H1 (cell line): ENCODE measurements at regions of chr18 and their contacts with region 1.

Region 1: GRCh38 chr18:36942264-36942663 is 113.3 kb downstream of the KIAA1328 start:
- DNase-seq: no peak
- H3K4me3 ChIP-seq: no peak overlapping the region
- H3K27ac ChIP-seq: no peak overlapping the region
- H3K4me1 ChIP-seq: peaks cover 0 to 15% (median 0%) of the 10 kb centered on the region in 4 experiments; a peak in 2 of 7 replicates
- H3K27me3 ChIP-seq: no peaks in the 10 kb centered on the region
- CTCF ChIP-seq: peak in 2 of 3 experiments; percentile 73 to 87; a peak in 3 of 4 replicates
- EP300 ChIP-seq: no peak
- POLR2A ChIP-seq: no peak
- RAD21 ChIP-seq: peak; percentile 96 to 97

Region 2: DNA sequence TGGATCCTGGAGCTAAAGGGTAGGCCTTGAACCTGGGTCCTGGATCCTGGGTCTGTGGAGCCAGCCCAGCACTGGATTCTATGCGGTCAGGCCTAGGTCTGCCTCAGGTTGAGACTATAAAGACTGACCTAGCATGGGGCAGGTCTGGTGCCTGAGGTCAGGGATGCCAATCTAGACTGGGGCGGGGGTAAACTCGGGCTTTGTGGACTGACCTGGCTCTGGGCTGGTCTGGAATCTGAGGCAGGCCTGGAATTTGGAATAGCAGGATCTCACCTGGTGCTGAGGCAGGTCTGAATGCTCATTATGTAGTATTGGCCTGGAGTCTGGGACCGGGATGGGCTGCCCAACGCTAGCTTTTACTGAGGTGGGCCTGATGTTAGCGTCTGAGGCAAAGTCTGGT is 142.6 kb after region 1 on chr18:
- CTCF ChIA-PET with region 1: interaction called, 13 read pairs
- POLR2A ChIA-PET with region 1: no interaction called
- DNase-seq: peak; percentile 63 to 70
- H3K4me3 ChIP-seq: no peak overlapping the region
- H3K27ac ChIP-seq: no peak overlapping the region
- H3K4me1 ChIP-seq: peaks cover 2 to 6% (median 3%) of the 10 kb centered on the region in 4 experiments; a peak in 4 of 7 replicates
- H3K27me3 ChIP-seq: no peaks in the 10 kb centered on the region
- CTCF ChIP-seq: no peak
- EP300 ChIP-seq: no peak
- POLR2A ChIP-seq: no peak
- RAD21 ChIP-seq: peak in 1 of 2 experiments; percentile 23; a peak in 1 of 4 replicates

Region 3: DNA sequence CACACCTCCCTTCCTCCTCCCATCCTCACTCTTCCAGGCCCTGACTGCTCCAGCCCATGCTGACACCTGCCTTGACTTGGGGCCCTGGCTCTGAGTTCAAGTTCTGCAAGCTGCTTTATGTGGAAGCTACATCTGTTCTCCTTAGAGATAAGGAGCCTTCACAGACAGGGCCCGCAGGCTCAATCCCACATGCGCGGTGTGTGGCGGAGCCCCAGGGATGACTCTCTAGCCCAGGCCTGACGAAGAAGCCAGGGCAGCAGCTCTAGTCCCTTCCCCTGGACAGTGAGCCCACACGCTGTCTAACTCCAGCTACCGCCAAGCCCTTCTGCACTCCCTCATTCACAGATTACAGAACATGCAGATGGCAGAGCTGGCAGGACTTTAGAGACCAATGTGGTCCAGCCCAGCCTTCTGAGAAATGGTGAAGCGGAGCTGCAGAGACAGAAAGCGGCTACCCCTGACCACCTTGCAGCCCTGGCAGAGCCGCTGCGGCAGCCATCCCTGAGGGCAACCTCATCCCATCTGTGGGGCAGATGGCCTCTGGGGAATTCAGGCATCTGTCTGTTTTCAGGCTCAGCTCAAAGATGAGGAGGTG is 319.1 kb after region 1 on chr18:
- CTCF ChIA-PET with region 1: interaction called, 40 read pairs
- POLR2A ChIA-PET with region 1: no interaction called
- DNase-seq: no peak
- H3K4me3 ChIP-seq: no peak overlapping the region
- H3K27ac ChIP-seq: no peak overlapping the region
- H3K4me1 ChIP-seq: peaks cover 0 to 4% (median 1%) of the 10 kb centered on the region in 4 experiments; a peak in 2 of 7 replicates
- H3K27me3 ChIP-seq: peaks cover 0 to 2% (median 0%) of the 10 kb centered on the region in 4 experiments; a peak in 2 of 7 replicates
- CTCF ChIP-seq: no peak
- EP300 ChIP-seq: no peak
- POLR2A ChIP-seq: no peak
- RAD21 ChIP-seq: no peak

Region 4: GRCh38 chr18:37299471-37300304 is 357.4 kb after region 1 on chr18:
- CTCF ChIA-PET with region 1: interaction called, 10 read pairs
- POLR2A ChIA-PET with region 1: no interaction called
- DNase-seq: no peak
- H3K4me3 ChIP-seq: no peak overlapping the region
- H3K27ac ChIP-seq: no peak overlapping the region
- H3K4me1 ChIP-seq: no peaks in the 10 kb centered on the region; a peak in 1 of 7 replicates
- H3K27me3 ChIP-seq: no peaks in the 10 kb centered on the region
- CTCF ChIP-seq: no peak
- EP300 ChIP-seq: no peak
- POLR2A ChIP-seq: no peak
- RAD21 ChIP-seq: no peak

Region 5: DNA sequence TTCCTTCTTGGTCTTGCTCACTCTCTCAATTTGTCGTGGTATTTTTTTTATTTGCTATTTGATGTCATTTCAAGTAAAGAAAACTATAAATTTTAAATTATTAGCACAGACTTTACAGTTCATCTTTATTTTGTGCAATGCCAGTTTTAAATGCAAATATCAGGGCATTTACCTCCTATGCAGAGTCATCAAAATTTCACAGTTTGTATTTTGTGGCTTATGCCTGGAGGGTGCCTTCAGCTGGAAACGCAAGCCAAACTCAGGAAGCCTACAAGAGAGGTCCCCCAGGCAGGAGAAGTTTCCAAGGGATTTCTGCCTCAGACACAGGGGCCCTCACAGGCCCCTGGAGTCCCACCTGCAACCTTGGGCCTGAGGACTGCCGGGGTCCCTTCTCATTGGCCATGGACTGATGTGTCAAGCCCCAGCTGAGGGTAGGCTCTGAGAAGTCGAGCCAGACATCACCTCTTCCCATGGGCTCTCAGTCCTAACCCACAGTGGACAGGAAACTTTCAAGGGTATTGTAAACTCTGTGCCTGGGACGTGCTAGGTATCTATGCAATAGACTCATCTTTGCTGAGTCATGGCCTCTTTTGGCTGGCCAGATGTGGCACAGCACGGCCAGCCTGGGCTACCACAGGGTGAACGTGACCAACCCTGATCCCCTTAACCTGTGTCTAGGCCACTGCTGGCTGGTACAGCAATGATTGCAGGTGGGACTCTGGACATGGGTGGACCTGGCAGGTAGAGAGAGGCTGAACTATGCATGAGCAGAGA is 386.9 kb after region 1 on chr18:
- CTCF ChIA-PET with region 1: interaction called, 18 read pairs
- POLR2A ChIA-PET with region 1: no interaction called
- DNase-seq: no peak
- H3K4me3 ChIP-seq: no peak overlapping the region
- H3K27ac ChIP-seq: no peak overlapping the region
- H3K4me1 ChIP-seq: peaks cover 0 to under 1% (median 0%) of the 10 kb centered on the region in 4 experiments; a peak in 2 of 7 replicates
- H3K27me3 ChIP-seq: no peaks in the 10 kb centered on the region
- CTCF ChIP-seq: no peak
- EP300 ChIP-seq: no peak
- POLR2A ChIP-seq: no peak
- RAD21 ChIP-seq: no peak

Region 6: DNA sequence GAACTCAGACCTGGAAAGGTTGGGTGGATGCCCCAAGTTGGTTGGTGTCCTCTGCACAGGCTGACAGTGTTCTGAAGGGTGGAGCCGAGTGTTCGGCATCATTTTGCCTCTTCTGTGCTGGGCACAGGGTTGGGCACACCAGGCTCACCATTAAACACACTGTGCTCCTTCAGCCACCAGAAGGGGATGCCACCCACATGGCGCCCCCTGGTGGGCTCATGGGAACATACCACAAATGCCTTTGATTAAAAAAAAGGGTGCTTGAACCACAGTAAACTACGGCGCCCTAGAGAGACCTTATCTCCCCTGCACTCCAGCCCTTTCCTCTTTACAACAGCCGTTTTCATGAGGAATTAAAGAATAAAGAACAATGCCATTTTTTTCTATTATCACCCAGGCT is 533.9 kb after region 1 on chr18:
- CTCF ChIA-PET with region 1: interaction called, 12 read pairs
- POLR2A ChIA-PET with region 1: interaction called, 3 read pairs
- DNase-seq: peak in 1 of 2 experiments; percentile 79
- H3K4me3 ChIP-seq: no peak overlapping the region
- H3K27ac ChIP-seq: no peak overlapping the region
- H3K4me1 ChIP-seq: peaks cover 0 to 6% (median 0%) of the 10 kb centered on the region in 4 experiments; a peak in 2 of 7 replicates
- H3K27me3 ChIP-seq: no peaks in the 10 kb centered on the region
- CTCF ChIP-seq: peak; percentile 69 to 94 (median 75)
- EP300 ChIP-seq: no peak
- POLR2A ChIP-seq: no peak
- RAD21 ChIP-seq: peak; percentile 71 to 79